ENCODE measurements at regions of chr10 and their contacts with region 1.

Region 1: GRCh38 chr10:8053446-8054290 is 820 bp upstream of the GATA3 start:
- DNase-seq: peak; percentile 98
- ATAC-seq: peak; percentile 67
- H3K4me3 Mint-ChIP-seq: peak overlapping the region; percentile 96
- H3K27ac Mint-ChIP-seq: peak overlapping the region; percentile 94
- H3K4me1 Mint-ChIP-seq: peaks cover 39% of the 10 kb centered on the region
- H3K27me3 Mint-ChIP-seq: peaks cover 18% of the 10 kb centered on the region

Region 2: DNA sequence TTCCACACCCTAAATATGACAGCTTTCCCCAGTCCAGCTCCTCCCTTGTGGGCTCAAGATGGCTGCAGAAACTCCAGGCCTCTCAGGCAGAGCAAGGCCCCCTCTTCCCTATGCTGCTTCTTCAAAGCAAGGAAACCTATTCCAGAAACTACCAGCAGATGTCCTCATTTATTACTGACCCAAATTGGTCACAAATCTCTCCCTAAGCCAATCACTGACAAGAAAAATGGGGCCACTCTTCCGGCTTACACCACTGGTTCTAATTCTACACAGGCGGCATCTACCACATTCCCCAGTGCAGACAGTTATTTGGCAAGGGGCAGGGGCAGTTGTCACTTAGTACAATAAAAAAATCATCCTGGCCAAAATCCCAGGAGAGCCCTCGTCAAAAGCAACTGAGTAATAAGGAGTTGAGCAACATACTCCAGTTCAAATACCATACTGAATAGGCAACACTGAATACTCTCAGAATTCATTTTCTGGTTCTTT is 793.2 kb before region 1 on chr10:
- CTCF ChIA-PET with region 1: no interaction called
- POLR2A ChIA-PET with region 1: no interaction called
- intact Hi-C with region 1: loop called in 1 of 2 experiments (anchors 10 kb)
- DNase-seq: no peak
- ATAC-seq: peak; percentile 11
- H3K4me3 Mint-ChIP-seq: no peak overlapping the region
- H3K27ac Mint-ChIP-seq: peak overlapping the region; percentile 16
- H3K4me1 Mint-ChIP-seq: peaks cover 58% of the 10 kb centered on the region
- H3K27me3 Mint-ChIP-seq: no peaks in the 10 kb centered on the region

Region 3: GRCh38 chr10:7818295-7819122 is 235.2 kb before region 1 on chr10 and contains the start of gene TAF3:
- CTCF ChIA-PET with region 1: no interaction called
- POLR2A ChIA-PET with region 1: no interaction called
- intact Hi-C with region 1: loop called in 1 of 2 experiments (anchors 1 kb)
- DNase-seq: peak; percentile 96
- ATAC-seq: peak; percentile 89
- H3K4me3 Mint-ChIP-seq: peak within 1 kb of the TSS; percentile 88
- H3K27ac Mint-ChIP-seq: peak within 1 kb of the TSS; percentile 83
- H3K4me1 Mint-ChIP-seq: peaks cover 25% of the 10 kb centered on the region
- H3K27me3 Mint-ChIP-seq: peaks cover 3% of the 10 kb centered on the region
- total RNA-seq, gene TAF3: 12.2 to 17.7 TPM

Region 4: GRCh38 chr10:8088504-8088903 is 34.8 kb after region 1 on chr10:
- CTCF ChIA-PET with region 1: no interaction called
- POLR2A ChIA-PET with region 1: no interaction called
- intact Hi-C with region 1: no loop called
- DNase-seq: peak; percentile 53
- ATAC-seq: peak; percentile 95
- H3K4me3 Mint-ChIP-seq: no peak overlapping the region
- H3K27ac Mint-ChIP-seq: no peak overlapping the region
- H3K4me1 Mint-ChIP-seq: peaks cover 14% of the 10 kb centered on the region
- H3K27me3 Mint-ChIP-seq: no peaks in the 10 kb centered on the region

Region 5: GRCh38 chr10:8112226-8112905 is 58.7 kb after region 1 on chr10:
- CTCF ChIA-PET with region 1: no interaction called
- POLR2A ChIA-PET with region 1: no interaction called
- intact Hi-C with region 1: no loop called
- DNase-seq: no peak
- ATAC-seq: no peak
- H3K4me3 Mint-ChIP-seq: no peak overlapping the region
- H3K27ac Mint-ChIP-seq: no peak overlapping the region
- H3K4me1 Mint-ChIP-seq: no peaks in the 10 kb centered on the region
- H3K27me3 Mint-ChIP-seq: no peaks in the 10 kb centered on the region

Region 6: DNA sequence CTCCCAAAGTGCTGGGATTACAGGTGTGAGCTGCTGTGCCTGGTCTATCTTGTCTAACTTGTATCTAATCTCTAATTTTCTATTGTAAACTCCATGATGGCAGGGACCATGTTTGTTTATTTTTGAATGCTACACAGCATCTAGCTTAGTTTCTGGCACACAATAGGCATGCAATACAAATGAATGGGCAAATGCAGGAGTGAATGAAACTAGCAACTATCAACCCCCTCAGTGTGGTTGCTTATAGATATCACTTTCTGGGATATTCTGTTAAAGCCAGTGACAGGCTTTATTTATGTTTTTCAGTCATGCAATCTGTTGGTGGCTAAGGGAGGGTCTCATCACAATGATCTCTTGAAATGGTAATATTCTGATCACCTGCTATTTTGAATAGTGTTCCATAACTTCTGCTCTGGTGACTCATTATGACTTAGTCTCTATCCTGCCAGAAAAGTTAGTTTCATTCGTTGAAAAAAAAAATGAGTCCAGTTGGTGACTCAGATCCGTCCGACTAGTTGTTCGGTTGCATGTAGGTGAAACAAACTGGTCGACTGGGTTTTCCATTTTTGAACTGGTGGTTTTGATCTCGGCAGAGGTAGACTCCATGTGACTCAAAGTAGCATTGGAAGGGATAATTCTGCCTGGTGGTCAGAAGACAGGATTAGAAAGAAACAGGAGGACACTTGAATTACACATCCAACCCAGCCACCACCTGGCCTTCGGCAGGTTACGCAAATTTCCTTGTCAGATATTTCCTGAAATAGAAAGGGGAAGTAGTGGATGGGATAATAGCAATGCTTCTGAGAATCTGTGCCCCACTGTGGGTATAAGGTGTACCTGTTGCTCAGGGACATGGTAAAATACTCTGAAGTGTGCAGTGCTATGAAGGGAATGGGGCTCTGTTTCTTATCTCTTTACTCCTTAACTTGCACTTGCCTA is 77.6 kb after region 1 on chr10:
- CTCF ChIA-PET with region 1: interaction called, 3 read pairs
- POLR2A ChIA-PET with region 1: no interaction called
- intact Hi-C with region 1: loop called (anchors 1 kb)
- DNase-seq: peak; percentile 56
- ATAC-seq: peak; percentile 82
- H3K4me3 Mint-ChIP-seq: no peak overlapping the region
- H3K27ac Mint-ChIP-seq: peak overlapping the region; percentile 51
- H3K4me1 Mint-ChIP-seq: peaks cover 40% of the 10 kb centered on the region
- H3K27me3 Mint-ChIP-seq: peaks cover 7% of the 10 kb centered on the region

Region 7: GRCh38 chr10:8331883-8332729 is 278.4 kb after region 1 on chr10:
- CTCF ChIA-PET with region 1: interaction called, 3 read pairs
- POLR2A ChIA-PET with region 1: no interaction called
- intact Hi-C with region 1: loop called in 1 of 2 experiments (anchors 1 kb)
- DNase-seq: peak; percentile 89
- ATAC-seq: peak; percentile 94
- H3K4me3 Mint-ChIP-seq: peak overlapping the region; percentile 79
- H3K27ac Mint-ChIP-seq: peak overlapping the region; percentile 78
- H3K4me1 Mint-ChIP-seq: peaks cover 60% of the 10 kb centered on the region
- H3K27me3 Mint-ChIP-seq: peaks cover 2% of the 10 kb centered on the region

Region 8: GRCh38 chr10:8386781-8387180 is 333.1 kb after region 1 on chr10:
- CTCF ChIA-PET with region 1: no interaction called
- POLR2A ChIA-PET with region 1: no interaction called
- intact Hi-C with region 1: no loop called
- DNase-seq: no peak
- ATAC-seq: no peak
- H3K4me3 Mint-ChIP-seq: no peak overlapping the region
- H3K27ac Mint-ChIP-seq: no peak overlapping the region
- H3K4me1 Mint-ChIP-seq: no peaks in the 10 kb centered on the region
- H3K27me3 Mint-ChIP-seq: no peaks in the 10 kb centered on the region

Region 9: GRCh38 chr10:9081253-9081652 is 1027.6 kb after region 1 on chr10:
- CTCF ChIA-PET with region 1: no interaction called
- POLR2A ChIA-PET with region 1: no interaction called
- intact Hi-C with region 1: loop called in 1 of 2 experiments (anchors 10 kb)
- DNase-seq: no peak
- ATAC-seq: no peak
- H3K4me3 Mint-ChIP-seq: no peak overlapping the region
- H3K27ac Mint-ChIP-seq: no peak overlapping the region
- H3K4me1 Mint-ChIP-seq: peaks cover 29% of the 10 kb centered on the region
- H3K27me3 Mint-ChIP-seq: peaks cover 16% of the 10 kb centered on the region

Region 10: DNA sequence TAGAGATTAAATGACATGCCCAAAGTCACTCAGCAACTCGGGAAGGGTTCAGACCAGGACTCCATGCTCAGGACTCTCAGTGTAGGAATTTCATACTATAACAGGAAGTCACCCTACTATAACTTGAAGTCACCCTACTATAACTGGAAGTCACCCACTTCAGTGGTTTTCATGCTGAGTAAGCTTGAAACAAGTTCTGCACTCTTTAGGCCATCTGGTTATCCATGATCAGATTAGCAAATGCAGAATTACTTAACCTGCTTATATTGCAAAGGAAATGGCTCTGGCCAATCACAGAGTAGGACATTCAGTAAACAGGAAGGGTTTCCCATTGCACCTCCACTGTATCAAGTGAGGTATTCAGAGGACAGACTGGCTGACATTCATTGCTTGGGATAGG is 1241.2 kb after region 1 on chr10:
- CTCF ChIA-PET with region 1: no interaction called
- POLR2A ChIA-PET with region 1: no interaction called
- intact Hi-C with region 1: loop called (anchors 5 to 10 kb)
- DNase-seq: peak; percentile 5
- ATAC-seq: peak; percentile 85
- H3K4me3 Mint-ChIP-seq: no peak overlapping the region
- H3K27ac Mint-ChIP-seq: no peak overlapping the region
- H3K4me1 Mint-ChIP-seq: peaks cover 18% of the 10 kb centered on the region
- H3K27me3 Mint-ChIP-seq: peaks cover 9% of the 10 kb centered on the region